Gastrocnemius medialis (tissue), 4 donors: ENCODE measurements at regions of chrX and their contacts with region 1.

Region 1: DNA sequence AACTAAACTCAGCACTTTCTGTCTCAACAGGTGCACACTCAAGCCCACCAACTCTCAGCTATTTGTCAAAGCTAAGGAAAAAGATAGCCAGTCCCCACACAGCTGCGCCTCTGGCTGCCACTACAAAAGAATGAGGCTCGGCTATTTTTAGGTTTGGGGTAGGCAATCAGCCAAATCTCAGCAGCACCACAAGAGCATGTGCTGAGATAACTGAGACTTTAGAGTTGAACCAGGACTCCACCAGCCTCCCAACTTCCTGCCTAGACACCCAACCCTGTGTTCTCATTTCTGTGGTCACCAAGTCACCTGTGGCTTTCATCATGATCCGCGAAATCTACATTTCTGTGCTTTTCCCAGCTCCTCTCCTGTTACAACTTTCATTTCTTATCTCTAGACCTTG is 28.0 kb downstream of the DMD start:
- DNase-seq: peak; percentile 66 to 82
- ATAC-seq: peak; percentile 95 to 97
- H3K4me3 ChIP-seq: peak overlapping the region; percentile 14 to 37 (median 25)
- H3K27ac ChIP-seq: peak overlapping the region; percentile 76 to 86 (median 84)
- H3K4me1 ChIP-seq: peaks cover 6 to 16% of the 10 kb centered on the region in 2 donors
- H3K27me3 ChIP-seq: no peaks in the 10 kb centered on the region
- CTCF ChIP-seq: peak in 1 of 5 experiments; percentile 8
- POLR2A ChIP-seq: no peak

Region 2: DNA sequence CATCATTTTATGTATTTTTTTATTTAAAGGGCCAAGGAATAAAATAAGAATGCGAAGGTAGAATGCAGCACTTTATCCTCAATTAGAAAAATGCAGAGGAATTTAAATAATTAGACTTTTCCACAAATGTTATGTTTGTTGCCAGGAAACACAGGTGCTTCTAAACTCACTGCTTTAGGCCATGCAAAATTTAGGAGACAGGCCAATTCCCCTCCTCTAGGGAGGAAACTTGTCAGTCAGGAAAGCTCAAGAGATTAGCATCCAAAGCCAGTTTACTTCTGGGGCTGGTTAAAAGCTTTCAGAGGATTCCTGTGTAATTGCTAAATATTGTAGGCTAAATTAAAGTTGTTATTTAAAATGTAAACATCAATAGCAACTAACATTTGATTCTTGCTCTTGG is 96.5 kb before region 1 on chrX:
- in situ Hi-C with region 1: loop called in 1 of 4 experiments (anchors 25 kb)
- intact Hi-C with region 1: no loop called
- DNase-seq: no peak
- ATAC-seq: no peak
- H3K4me3 ChIP-seq: no peak overlapping the region
- H3K27ac ChIP-seq: peak overlapping the region in 2 of 4 donors; percentile 4 to 46
- H3K4me1 ChIP-seq: peaks cover 8 to 12% of the 10 kb centered on the region in 2 donors
- H3K27me3 ChIP-seq: no peaks in the 10 kb centered on the region
- CTCF ChIP-seq: no peak
- POLR2A ChIP-seq: no peak